ENCODE measurements at regions of chr2 and their contacts with region 1.

Region 1: GRCh38 chr2:215994901-215995300 is 18.4 kb downstream of the MREG start:
- DNase-seq: no peak
- ATAC-seq: no peak
- H3K4me3 ChIP-seq: no peak overlapping the region
- H3K4me3 Mint-ChIP-seq: no peak overlapping the region
- H3K27ac ChIP-seq: no peak overlapping the region
- H3K27ac Mint-ChIP-seq: no peak overlapping the region
- H3K4me1 ChIP-seq: peaks cover 4 to 11% of the 10 kb centered on the region in 2 experiments
- H3K4me1 Mint-ChIP-seq: peaks cover 9 to 10% (median 10%) of the 10 kb centered on the region in 3 donors
- H3K27me3 ChIP-seq: no peaks in the 10 kb centered on the region
- H3K27me3 Mint-ChIP-seq: no peaks in the 10 kb centered on the region

Region 2: DNA sequence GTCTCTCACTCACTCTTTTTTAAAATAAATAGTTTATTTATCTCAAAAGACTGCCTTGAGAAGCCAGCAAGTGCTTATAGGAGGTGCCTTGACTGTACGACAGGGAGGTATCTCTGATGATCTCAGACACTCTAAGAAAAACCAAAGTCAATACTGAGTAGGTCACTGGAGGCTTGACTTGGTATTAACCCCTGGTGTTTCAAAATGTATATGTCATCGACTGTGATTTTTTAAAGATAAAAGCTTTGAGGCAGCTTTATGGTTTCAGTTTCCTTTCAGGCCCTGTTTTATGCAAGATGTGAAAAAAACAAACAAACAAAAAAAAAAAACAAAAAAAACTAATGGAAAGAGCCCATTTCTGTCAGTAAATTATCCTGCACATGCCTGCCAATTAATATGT is 15.2 kb before region 1 on chr2:
- CTCF ChIA-PET with region 1: no interaction called
- POLR2A ChIA-PET with region 1: no interaction called
- DNase-seq: peak in 1 of 35 experiments; percentile 9
- ATAC-seq: peak in 1 of 4 experiments; percentile 54
- H3K4me3 ChIP-seq: no peak overlapping the region
- H3K4me3 Mint-ChIP-seq: no peak overlapping the region
- H3K27ac ChIP-seq: no peak overlapping the region
- H3K27ac Mint-ChIP-seq: no peak overlapping the region
- H3K4me1 ChIP-seq: peaks cover 0 to 9% of the 10 kb centered on the region in 2 experiments
- H3K4me1 Mint-ChIP-seq: peaks cover 12 to 25% (median 14%) of the 10 kb centered on the region in 3 donors
- H3K27me3 ChIP-seq: no peaks in the 10 kb centered on the region
- H3K27me3 Mint-ChIP-seq: no peaks in the 10 kb centered on the region

Region 3: DNA sequence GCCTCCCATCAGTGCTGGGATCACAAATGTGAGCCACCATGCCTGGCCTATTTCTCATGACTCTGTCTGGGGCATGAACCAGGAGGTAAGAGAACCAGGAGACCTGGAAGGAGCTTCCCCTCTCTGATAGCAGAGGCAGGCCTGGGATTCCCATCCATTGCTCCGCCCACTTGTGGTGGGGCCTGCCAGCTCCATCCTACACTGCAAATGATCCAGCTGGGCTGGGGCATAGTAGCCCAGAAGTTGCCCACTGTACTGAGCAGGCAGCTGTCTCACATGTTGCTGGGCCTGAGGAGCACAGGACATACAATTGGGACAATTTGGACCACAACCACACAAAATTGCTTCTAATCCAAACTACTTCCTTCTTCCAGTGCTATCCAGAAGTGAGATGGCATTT is 286.4 kb after region 1 on chr2:
- CTCF ChIA-PET with region 1: interaction called in 1 of 2 experiments, 11 read pairs
- POLR2A ChIA-PET with region 1: no interaction called
- DNase-seq: no peak
- ATAC-seq: no peak
- H3K4me3 ChIP-seq: no peak overlapping the region
- H3K4me3 Mint-ChIP-seq: no peak overlapping the region
- H3K27ac ChIP-seq: no peak overlapping the region
- H3K27ac Mint-ChIP-seq: no peak overlapping the region
- H3K4me1 ChIP-seq: no peaks in the 10 kb centered on the region
- H3K4me1 Mint-ChIP-seq: peaks cover 0 to 5% (median 0%) of the 10 kb centered on the region in 3 donors
- H3K27me3 ChIP-seq: peaks cover 0 to 3% of the 10 kb centered on the region in 2 experiments
- H3K27me3 Mint-ChIP-seq: peaks cover 0 to 2% of the 10 kb centered on the region in 2 donors